Naive thymus-derived CD4-positive, alpha-beta T cell (primary cell): ENCODE measurements at regions of chr2 and their contacts with region 1.

Region 1: GRCh38 chr2:229852565-229852964 is 69.2 kb downstream of the TRIP12 start:
- DNase-seq: peak in 7 of 9 donors; percentile 45 to 70 (median 58)
- ATAC-seq: peak; percentile 91
- H3K4me3 ChIP-seq: no peak overlapping the region
- H3K4me3 Mint-ChIP-seq: peak overlapping the region in 9 of 10 donors; percentile 14 to 64 (median 27)
- H3K27ac ChIP-seq: peak overlapping the region; percentile 53
- H3K27ac Mint-ChIP-seq: peak overlapping the region; percentile 51 to 96 (median 86)
- H3K4me1 ChIP-seq: peaks cover 25 to 37% of the 10 kb centered on the region in 2 donors
- H3K4me1 Mint-ChIP-seq: peaks cover 30 to 92% (median 73%) of the 10 kb centered on the region in 7 donors
- H3K27me3 ChIP-seq: no peaks in the 10 kb centered on the region
- H3K27me3 Mint-ChIP-seq: no peaks in the 10 kb centered on the region

Region 2: DNA sequence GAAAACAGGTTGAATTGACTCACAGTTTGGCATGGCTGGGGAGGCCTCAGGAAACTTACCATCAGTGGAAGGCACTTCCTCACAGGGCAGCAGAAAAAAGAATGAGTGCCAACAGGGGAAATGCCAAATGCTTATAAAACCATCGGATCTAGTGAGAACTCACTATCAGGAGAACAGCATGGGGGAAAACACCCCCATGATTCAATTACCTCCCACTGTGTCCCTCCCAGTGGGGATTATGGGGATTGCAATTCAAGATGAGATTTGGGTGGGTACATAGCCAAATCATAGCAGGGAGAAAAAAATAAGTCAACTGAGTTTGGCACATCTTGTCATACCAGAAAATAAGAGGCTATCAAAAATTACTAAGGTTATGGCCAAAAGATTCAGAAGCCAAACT is 27.1 kb before region 1 on chr2:
- CTCF ChIA-PET with region 1: no interaction called
- POLR2A ChIA-PET with region 1: no interaction called
- intact Hi-C with region 1: loop called in 1 of 2 experiments (anchors 2 kb)
- DNase-seq: no peak
- ATAC-seq: no peak
- H3K4me3 ChIP-seq: no peak overlapping the region
- H3K4me3 Mint-ChIP-seq: no peak overlapping the region
- H3K27ac ChIP-seq: no peak overlapping the region
- H3K27ac Mint-ChIP-seq: peak overlapping the region in 5 of 9 donors; percentile 12 to 74 (median 40)
- H3K4me1 ChIP-seq: no peaks in the 10 kb centered on the region
- H3K4me1 Mint-ChIP-seq: peaks cover 8 to 23% (median 18%) of the 10 kb centered on the region in 7 donors
- H3K27me3 ChIP-seq: no peaks in the 10 kb centered on the region
- H3K27me3 Mint-ChIP-seq: no peaks in the 10 kb centered on the region

Region 3: DNA sequence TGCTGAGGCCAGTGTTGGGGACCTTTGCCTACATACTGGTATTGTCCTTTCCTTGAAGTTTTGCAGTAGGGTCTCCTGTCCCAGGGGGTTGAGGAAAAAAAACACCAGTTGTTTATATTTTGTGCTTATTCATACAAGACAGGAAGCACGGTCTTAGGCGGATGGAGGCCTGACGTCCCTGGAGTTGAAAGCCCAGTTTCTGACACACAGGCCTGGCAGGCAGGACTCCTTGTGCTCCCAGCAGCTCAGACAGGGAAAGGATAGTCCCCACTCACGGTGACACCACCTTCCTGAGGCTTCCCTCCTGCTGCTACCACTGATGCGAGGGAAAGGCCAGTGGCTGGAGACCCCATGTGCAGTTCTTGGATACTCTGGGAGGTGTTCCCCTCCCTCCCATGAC is 547.9 kb after region 1 on chr2:
- CTCF ChIA-PET with region 1: no interaction called
- POLR2A ChIA-PET with region 1: no interaction called
- intact Hi-C with region 1: no loop called
- DNase-seq: no peak
- ATAC-seq: no peak
- H3K4me3 ChIP-seq: no peak overlapping the region
- H3K4me3 Mint-ChIP-seq: no peak overlapping the region
- H3K27ac ChIP-seq: no peak overlapping the region
- H3K27ac Mint-ChIP-seq: peak overlapping the region in 2 of 9 donors; percentile 12 to 21
- H3K4me1 ChIP-seq: no peaks in the 10 kb centered on the region
- H3K4me1 Mint-ChIP-seq: peaks cover 0 to 4% (median 3%) of the 10 kb centered on the region in 7 donors
- H3K27me3 ChIP-seq: no peaks in the 10 kb centered on the region
- H3K27me3 Mint-ChIP-seq: no peaks in the 10 kb centered on the region